ENCODE measurements at regions of chr11 and their contacts with region 1.

Region 1: GRCh38 chr11:34997952-34998528 is 81.6 kb downstream of the PDHX start:
- DNase-seq: no peak
- ATAC-seq: peak; percentile 69 to 91 (median 86)
- H3K4me3 ChIP-seq: no peak overlapping the region
- H3K27ac ChIP-seq: no peak overlapping the region
- H3K4me1 ChIP-seq: peaks cover 6 to 18% (median 17%) of the 10 kb centered on the region in 3 donors
- H3K27me3 ChIP-seq: no peaks in the 10 kb centered on the region
- CTCF ChIP-seq: peak in 2 of 4 donors; percentile 24 to 26

Region 2: GRCh38 chr11:35237860-35238715 is 240.0 kb after region 1 on chr11:
- intact Hi-C with region 1: no loop called
- DNase-seq: no peak
- ATAC-seq: no peak
- H3K4me3 ChIP-seq: no peak overlapping the region
- H3K27ac ChIP-seq: peak overlapping the region in 2 of 4 donors; percentile 63 to 64
- H3K4me1 ChIP-seq: peaks cover 11 to 56% (median 47%) of the 10 kb centered on the region in 3 donors
- H3K27me3 ChIP-seq: no peaks in the 10 kb centered on the region
- CTCF ChIP-seq: peak in 2 of 4 donors; percentile 29 to 51

Region 3: DNA sequence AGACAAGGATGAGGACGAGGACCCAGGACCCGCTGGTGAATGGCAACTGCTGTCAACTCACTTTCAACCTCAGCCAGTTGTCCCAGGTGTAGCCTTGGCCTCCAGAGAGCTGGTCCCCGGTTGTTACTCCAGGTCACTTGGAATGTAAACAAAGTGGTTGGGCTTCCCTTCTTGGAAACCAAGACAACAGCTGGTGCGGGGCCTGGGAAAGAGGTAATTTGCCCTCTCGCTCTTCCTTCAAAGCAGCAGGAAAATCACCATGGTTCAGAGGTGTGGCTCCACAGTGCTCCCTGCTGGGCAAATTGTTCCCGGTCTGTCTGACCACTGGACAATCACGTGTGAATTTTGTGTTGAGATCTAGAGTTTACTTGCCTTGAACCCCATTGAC is 406.3 kb after region 1 on chr11:
- intact Hi-C with region 1: loop called in 2 of 3 experiments (anchors 10 kb)
- DNase-seq: peak; percentile 81 to 89 (median 86)
- ATAC-seq: peak; percentile 84 to 92 (median 86)
- H3K4me3 ChIP-seq: peak overlapping the region in 3 of 4 donors; percentile 16 to 46 (median 31)
- H3K27ac ChIP-seq: peak overlapping the region; percentile 63 to 87 (median 72)
- H3K4me1 ChIP-seq: peaks cover 11 to 20% (median 20%) of the 10 kb centered on the region in 3 donors
- H3K27me3 ChIP-seq: no peaks in the 10 kb centered on the region
- CTCF ChIP-seq: peak in 3 of 4 donors; percentile 23 to 52 (median 49)

Measured in pancreas (tissue), 10 donors.